ENCODE measurements at regions of chr7 and their contacts with region 1.

Region 1: GRCh38 chr7:66591799-66592596 is 36.7 kb upstream of the KCTD7 start:
- DNase-seq: peak; percentile 95
- ATAC-seq: peak; percentile 99
- H3K4me3 Mint-ChIP-seq: peak overlapping the region; percentile 85
- H3K27ac Mint-ChIP-seq: peak overlapping the region; percentile 92
- H3K4me1 Mint-ChIP-seq: peaks cover 44% of the 10 kb centered on the region
- H3K27me3 Mint-ChIP-seq: no peaks in the 10 kb centered on the region
- CTCF ChIP-seq: no peak

Region 2: DNA sequence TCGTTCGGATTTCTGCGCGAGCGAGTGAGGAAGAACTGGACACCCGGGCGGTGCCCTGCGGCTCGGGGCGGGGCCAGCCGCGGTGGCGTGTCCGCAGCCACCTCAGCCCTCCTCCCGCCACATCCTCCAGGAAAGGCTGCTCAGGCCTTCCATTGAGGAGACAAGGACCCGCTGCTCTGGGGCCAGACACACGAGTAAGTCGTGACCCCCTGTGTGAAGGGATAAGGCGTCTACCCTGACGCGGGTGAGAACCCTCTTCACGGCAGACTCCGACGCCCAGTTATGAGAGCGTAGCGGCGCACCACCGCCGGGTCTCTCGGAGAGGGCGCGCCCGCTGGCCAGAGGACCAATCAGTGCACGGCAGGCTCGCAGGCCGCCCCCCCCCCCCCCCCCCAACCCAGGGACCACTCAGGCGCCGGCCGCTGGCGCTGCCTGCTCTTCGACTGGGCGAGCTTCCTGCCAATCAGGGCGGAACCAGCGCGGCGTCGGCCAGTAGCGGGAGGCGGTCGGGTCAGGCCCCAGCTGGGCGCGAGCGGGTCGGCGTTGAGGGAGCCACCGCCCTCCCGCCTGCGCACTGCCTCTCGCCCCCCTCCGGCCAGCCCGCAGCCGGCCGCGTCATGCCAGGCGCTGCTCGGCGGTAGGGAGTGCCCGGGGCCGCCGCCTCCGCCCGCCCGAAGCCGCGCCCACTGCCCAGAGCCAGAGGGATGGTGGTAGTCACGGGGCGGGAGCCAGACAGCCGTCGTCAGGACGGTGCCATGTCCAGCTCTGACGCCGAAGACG is 36.6 kb after region 1 on chr7 and contains the start of gene KCTD7:
- CTCF ChIA-PET with region 1: interaction called, 4 read pairs
- POLR2A ChIA-PET with region 1: interaction called, 4 read pairs
- intact Hi-C with region 1: loop called (anchors 5 kb)
- DNase-seq: peak; percentile 96
- ATAC-seq: peak; percentile 93
- H3K4me3 Mint-ChIP-seq: peak within 1 kb of the TSS; percentile 84
- H3K27ac Mint-ChIP-seq: peak within 1 kb of the TSS; percentile 83
- H3K4me1 Mint-ChIP-seq: peaks cover 39% of the 10 kb centered on the region
- H3K27me3 Mint-ChIP-seq: no peaks in the 10 kb centered on the region
- CTCF ChIP-seq: no peak
- total RNA-seq, gene KCTD7: 4.8 to 5.4 TPM